AG04449 (cell line): ENCODE measurements at regions of chr17 and their contacts with region 1.

Region 1: GRCh38 chr17:64520359-64520758 is 13.6 kb downstream of the CEP95 start:
- DNase-seq: no peak
- H3K4me3 ChIP-seq: no peak overlapping the region
- CTCF ChIP-seq: no peak

Region 2: GRCh38 chr17:64534175-64534574 is 13.8 kb after region 1 on chr17:
- CTCF ChIA-PET with region 1: interaction called, 11 read pairs
- POLR2A ChIA-PET with region 1: interaction called, 3 read pairs
- DNase-seq: no peak
- H3K4me3 ChIP-seq: no peak overlapping the region
- CTCF ChIP-seq: no peak